ENCODE measurements at regions of chr17 and their contacts with region 1.

Region 1: DNA sequence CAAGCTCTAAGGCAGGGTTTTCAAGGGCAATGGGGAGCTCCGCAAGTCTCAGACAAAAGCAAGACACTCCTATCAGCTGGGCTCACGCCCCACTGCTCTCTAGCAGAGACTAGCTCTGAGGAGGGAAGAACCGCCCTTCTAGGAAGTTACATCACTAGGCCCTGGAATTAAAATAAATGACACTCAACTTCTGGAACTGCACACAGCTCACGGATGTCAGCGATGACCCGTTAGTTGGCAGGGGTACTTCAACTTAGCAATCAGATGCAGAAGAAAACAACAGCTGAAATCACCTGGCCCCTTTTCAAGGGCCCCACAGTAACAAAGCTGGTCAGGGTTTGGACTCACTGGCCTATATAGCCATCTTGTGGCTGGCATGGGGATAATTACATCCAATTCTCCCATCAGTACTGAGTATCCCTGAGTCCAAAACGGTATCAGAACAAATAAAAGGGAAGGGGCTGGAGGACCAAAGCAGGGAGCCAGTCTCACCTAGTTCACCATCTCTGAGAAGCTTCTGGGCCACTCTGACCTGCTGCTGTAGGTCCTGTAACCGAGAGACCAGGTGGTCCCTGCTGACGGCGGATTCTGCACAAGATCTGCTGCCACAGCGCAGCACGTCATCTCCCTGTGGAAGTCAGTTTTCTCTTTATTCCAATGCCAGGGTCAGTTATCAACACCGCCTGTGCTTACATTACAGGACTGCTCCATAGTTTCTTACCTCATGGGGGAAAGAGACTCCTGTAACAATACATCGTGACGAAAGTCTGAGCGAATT is 22.2 kb downstream of the SERPINF1 start:
- DNase-seq: peak; percentile 68
- H3K4me3 ChIP-seq: no peak overlapping the region
- H3K27ac ChIP-seq: peak overlapping the region; percentile 90
- H3K4me1 ChIP-seq: peaks cover 25% of the 10 kb centered on the region
- H3K27me3 ChIP-seq: no peaks in the 10 kb centered on the region
- CTCF ChIP-seq: peak; percentile 35 to 91 (median 68)
- POLR2A ChIP-seq: no peak

Region 2: DNA sequence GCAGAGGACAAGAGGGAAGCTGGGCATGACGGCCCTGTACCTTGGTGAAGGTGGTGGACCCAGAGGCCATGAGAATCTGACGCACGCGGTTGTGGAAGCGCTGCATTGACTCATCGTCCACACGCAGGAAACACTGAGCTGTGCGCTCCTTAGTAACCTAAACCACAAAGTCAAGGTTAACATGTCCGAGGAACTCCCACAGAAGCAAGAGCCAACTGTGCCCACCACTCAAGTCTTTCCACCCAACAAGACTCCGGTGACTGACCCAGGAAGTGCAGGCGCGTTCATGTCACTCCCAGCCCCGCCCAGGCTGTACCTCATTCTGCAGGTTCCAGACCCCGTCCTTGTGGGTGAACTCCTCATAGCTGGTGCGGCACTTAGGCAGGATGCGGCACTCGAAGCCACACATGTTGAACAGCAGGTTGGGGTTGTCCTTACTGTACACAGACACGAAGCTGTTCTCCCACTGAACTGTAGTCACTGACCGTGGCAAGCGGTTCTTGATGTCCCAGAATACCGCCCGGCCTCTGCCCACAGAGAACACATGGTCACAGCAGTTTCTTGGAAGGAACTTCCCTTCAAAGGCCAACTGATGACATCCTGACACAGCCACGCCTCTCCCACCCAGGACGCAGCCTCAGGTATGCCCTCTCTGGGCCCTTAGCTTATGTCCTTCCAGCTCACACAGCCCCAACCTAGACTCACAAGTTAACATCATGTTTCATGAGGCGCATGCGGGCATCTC is 110.8 kb before region 1 on chr17:
- intact Hi-C with region 1: loop called (anchors 5 kb)
- DNase-seq: no peak
- H3K4me3 ChIP-seq: no peak overlapping the region
- H3K27ac ChIP-seq: no peak overlapping the region
- H3K4me1 ChIP-seq: no peaks in the 10 kb centered on the region
- H3K27me3 ChIP-seq: no peaks in the 10 kb centered on the region
- CTCF ChIP-seq: no peak
- POLR2A ChIP-seq: no peak

Region 3: GRCh38 chr17:1829592-1830257 is 45.7 kb after region 1 on chr17 and contains the starts of genes RPA1 and SMYD4:
- intact Hi-C with region 1: loop called (anchors 5 kb)
- DNase-seq: peak; percentile 82
- H3K4me3 ChIP-seq: peak within 1 kb of the TSS; percentile 78 to 93
- H3K27ac ChIP-seq: peak within 1 kb of the TSS; percentile 86 to 90
- H3K4me1 ChIP-seq: peaks cover 4% of the 10 kb centered on the region
- H3K27me3 ChIP-seq: no peaks in the 10 kb centered on the region
- CTCF ChIP-seq: peak in 1 of 4 experiments; percentile 28
- POLR2A ChIP-seq: peak; percentile 84
- total RNA-seq, gene RPA1: 33.0 to 34.0 TPM
- total RNA-seq, gene SMYD4: 13.6 to 14.7 TPM